GM12878 (cell line): ENCODE measurements at regions of chr3 and their contacts with region 1.

Region 1: DNA sequence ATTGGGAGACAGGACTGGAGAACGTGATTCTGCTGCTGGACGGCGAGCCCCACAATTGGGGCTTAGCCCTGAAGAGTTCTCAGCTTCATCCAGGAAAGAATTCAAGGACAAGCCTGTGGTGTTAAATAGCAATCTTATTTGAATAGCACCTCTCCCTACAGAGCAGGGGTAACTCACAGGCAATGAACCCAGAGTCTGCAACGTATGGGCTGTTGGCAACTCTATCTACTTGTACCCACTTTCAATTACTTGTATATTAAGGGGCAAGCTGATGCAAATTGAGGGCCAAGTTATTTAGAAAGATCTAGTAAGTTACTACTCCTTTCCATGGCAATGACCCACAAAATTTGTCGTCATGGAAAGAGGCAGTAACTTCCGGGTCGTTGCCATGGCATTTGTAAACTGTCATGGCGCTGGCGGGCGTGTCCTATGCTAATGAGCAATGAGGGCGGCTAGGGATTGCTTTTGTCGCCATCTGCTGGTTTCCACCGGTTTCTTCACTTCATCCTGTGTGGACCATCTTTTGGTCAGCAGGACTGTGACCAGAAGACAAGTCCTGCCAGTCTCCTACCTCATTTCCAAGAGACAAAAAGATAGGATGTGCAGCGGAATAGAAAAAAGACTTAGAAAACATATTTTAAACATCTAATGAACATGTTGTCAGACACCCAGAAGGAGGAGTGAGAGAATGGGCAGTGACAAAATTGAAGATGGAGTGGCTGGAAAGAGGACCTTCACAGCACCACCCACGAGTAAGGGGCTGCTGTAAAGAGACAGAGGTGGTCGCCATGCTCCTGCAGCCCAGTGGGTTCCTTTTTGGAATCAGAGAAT is 45.8 kb upstream of the SH3BP5 start:
- DNase-seq: peak; percentile 81
- ATAC-seq: peak; percentile 95
- H3K4me3 ChIP-seq: no peak overlapping the region
- H3K27ac ChIP-seq: peak overlapping the region; percentile 27; the same call in 1 of the 2 replicates
- H3K4me1 ChIP-seq: peaks cover 16% of the 10 kb centered on the region
- H3K27me3 ChIP-seq: no peaks in the 10 kb centered on the region
- CTCF ChIP-seq: peak; percentile 82 to 92 (median 86)
- EP300 ChIP-seq: peak; percentile 44 to 85; a peak in 2 of 4 replicates
- POLR2A ChIP-seq: no peak
- RAD21 ChIP-seq: peak; percentile 80

Region 2: GRCh38 chr3:14997941-14998340 is 380.2 kb before region 1 on chr3:
- CTCF ChIA-PET with region 1: no interaction called
- POLR2A ChIA-PET with region 1: no interaction called
- RAD21 ChIA-PET with region 1: no interaction called
- SMC1A ChIA-PET with region 1: no interaction called
- in situ Hi-C with region 1: no loop called
- intact Hi-C with region 1: no loop called
- DNase-seq: no peak
- ATAC-seq: no peak
- H3K4me3 ChIP-seq: no peak overlapping the region
- H3K27ac ChIP-seq: no peak overlapping the region
- H3K4me1 ChIP-seq: no peaks in the 10 kb centered on the region
- H3K27me3 ChIP-seq: no peaks in the 10 kb centered on the region
- CTCF ChIP-seq: no peak
- EP300 ChIP-seq: no peak
- POLR2A ChIP-seq: no peak
- RAD21 ChIP-seq: no peak

Region 3: DNA sequence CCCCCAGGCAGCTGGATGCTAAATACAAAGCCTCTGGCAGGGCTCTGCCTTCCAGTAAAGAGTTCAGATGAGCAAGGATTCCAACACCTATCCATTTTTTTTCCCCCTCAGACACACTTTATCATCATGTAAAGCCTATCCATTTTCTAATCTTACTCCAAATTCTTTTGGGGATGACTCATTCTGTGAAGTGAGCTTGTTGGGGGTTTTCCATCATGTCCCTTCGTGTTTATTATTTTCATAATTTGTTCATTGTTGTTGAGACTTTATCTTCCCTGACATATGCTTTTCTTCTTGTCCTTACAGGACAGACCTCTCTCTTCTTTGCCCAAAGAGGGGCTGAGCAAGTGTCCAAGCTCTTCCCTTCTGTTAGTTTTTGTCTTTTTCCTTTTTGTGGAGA is 11.1 kb before region 1 on chr3:
- CTCF ChIA-PET with region 1: interaction called, 16 read pairs
- POLR2A ChIA-PET with region 1: interaction called, 13 read pairs
- RAD21 ChIA-PET with region 1: interaction called, 35 read pairs
- SMC1A ChIA-PET with region 1: interaction called, 49 read pairs
- in situ Hi-C with region 1: no loop called
- intact Hi-C with region 1: no loop called
- DNase-seq: no peak
- ATAC-seq: peak; percentile 13
- H3K4me3 ChIP-seq: no peak overlapping the region
- H3K27ac ChIP-seq: no peak overlapping the region
- H3K4me1 ChIP-seq: peaks cover 24% of the 10 kb centered on the region
- H3K27me3 ChIP-seq: no peaks in the 10 kb centered on the region
- CTCF ChIP-seq: no peak
- EP300 ChIP-seq: 0 out of 4 replicates have a peak, but pooled peaks of 1 of the 2 experiments have one; percentile 33
- POLR2A ChIP-seq: no peak
- RAD21 ChIP-seq: no peak

Region 4: DNA sequence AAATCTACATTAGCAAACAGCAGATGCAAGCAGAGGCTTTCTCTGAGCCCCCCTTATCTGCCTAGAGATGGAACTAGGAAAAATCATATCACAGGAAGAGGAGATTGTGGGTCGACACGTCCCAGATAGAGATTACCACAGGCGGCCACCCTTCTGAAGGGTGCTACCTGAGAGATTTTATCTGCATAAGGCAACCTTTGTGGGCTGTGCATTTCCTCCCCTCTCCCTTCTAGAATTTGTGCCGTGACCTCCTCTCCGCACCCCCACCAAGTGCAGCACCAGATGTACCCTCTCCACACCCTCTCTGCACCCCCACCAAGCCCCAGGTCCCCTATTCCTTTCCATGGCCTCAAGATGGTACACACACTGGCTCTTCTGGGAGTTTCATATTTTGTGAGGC is 21.8 kb after region 1 on chr3:
- CTCF ChIA-PET with region 1: interaction called, 45 read pairs
- POLR2A ChIA-PET with region 1: interaction called, 5 read pairs
- RAD21 ChIA-PET with region 1: interaction called, 19 read pairs
- SMC1A ChIA-PET with region 1: interaction called, 59 read pairs
- in situ Hi-C with region 1: no loop called
- intact Hi-C with region 1: no loop called
- DNase-seq: no peak
- ATAC-seq: no peak
- H3K4me3 ChIP-seq: no peak overlapping the region
- H3K27ac ChIP-seq: no peak overlapping the region
- H3K4me1 ChIP-seq: peaks cover 10% of the 10 kb centered on the region
- H3K27me3 ChIP-seq: no peaks in the 10 kb centered on the region
- CTCF ChIP-seq: no peak
- EP300 ChIP-seq: no peak
- POLR2A ChIP-seq: no peak
- RAD21 ChIP-seq: no peak